GM12878 (cell line): ENCODE measurements at regions of chr1 and their contacts with region 1.

Region 1: GRCh38 chr1:76635784-76636183 is 231.5 kb upstream of the ST6GALNAC5 start:
- DNase-seq: no peak
- ATAC-seq: no peak
- H3K4me3 ChIP-seq: no peak overlapping the region
- H3K27ac ChIP-seq: no peak overlapping the region
- H3K4me1 ChIP-seq: no peaks in the 10 kb centered on the region
- H3K27me3 ChIP-seq: no peaks in the 10 kb centered on the region
- CTCF ChIP-seq: no peak
- EP300 ChIP-seq: no peak
- POLR2A ChIP-seq: no peak
- RAD21 ChIP-seq: no peak

Region 2: GRCh38 chr1:76366726-76367125 is 269.1 kb before region 1 on chr1:
- CTCF ChIA-PET with region 1: no interaction called
- POLR2A ChIA-PET with region 1: no interaction called
- RAD21 ChIA-PET with region 1: no interaction called
- SMC1A ChIA-PET with region 1: no interaction called
- in situ Hi-C with region 1: no loop called
- intact Hi-C with region 1: no loop called
- DNase-seq: no peak
- ATAC-seq: no peak
- H3K4me3 ChIP-seq: no peak overlapping the region
- H3K27ac ChIP-seq: no peak overlapping the region
- H3K4me1 ChIP-seq: no peaks in the 10 kb centered on the region
- H3K27me3 ChIP-seq: no peaks in the 10 kb centered on the region
- CTCF ChIP-seq: no peak
- EP300 ChIP-seq: no peak
- POLR2A ChIP-seq: no peak
- RAD21 ChIP-seq: no peak

Region 3: DNA sequence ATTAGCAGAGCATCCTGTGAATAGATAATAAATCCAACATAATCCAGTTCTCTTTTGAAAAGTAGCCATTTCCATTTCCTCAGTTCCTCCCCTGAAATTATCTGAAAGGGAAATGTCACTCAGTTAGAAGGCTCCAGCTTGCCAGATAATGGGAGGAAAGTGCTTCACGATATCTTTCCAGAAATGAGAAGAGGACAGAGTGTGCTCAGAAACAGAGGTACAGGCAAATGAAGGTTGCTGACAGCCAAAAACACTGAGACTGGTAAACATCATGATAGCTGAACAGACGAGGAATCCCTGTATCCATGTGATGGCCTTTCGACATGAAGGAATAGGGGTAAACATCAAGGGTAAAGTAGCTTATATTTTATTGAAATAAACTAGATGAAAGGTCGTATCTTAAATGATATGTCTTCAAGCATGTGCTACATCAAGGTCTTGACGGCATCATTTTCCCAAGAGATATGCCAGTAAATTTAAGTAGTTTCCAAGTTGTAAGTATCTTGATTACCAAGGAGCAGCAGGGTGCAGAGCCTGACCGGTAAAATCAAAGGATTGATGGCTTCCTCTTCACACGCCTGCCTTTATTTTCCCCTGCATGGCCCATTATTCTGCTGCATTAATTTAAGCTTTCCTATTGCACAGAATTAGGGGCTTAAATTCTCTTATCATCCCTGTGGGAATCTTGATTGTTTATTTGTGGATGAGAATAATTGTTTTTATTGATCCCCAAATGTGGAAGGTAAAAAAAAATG is 12.8 kb before region 1 on chr1:
- CTCF ChIA-PET with region 1: no interaction called
- POLR2A ChIA-PET with region 1: no interaction called
- RAD21 ChIA-PET with region 1: no interaction called
- SMC1A ChIA-PET with region 1: interaction called, 11 read pairs
- in situ Hi-C with region 1: no loop called
- intact Hi-C with region 1: no loop called
- DNase-seq: no peak
- ATAC-seq: no peak
- H3K4me3 ChIP-seq: no peak overlapping the region
- H3K27ac ChIP-seq: no peak overlapping the region
- H3K4me1 ChIP-seq: no peaks in the 10 kb centered on the region
- H3K27me3 ChIP-seq: no peaks in the 10 kb centered on the region
- CTCF ChIP-seq: no peak
- EP300 ChIP-seq: no peak
- POLR2A ChIP-seq: no peak
- RAD21 ChIP-seq: no peak

Region 4: DNA sequence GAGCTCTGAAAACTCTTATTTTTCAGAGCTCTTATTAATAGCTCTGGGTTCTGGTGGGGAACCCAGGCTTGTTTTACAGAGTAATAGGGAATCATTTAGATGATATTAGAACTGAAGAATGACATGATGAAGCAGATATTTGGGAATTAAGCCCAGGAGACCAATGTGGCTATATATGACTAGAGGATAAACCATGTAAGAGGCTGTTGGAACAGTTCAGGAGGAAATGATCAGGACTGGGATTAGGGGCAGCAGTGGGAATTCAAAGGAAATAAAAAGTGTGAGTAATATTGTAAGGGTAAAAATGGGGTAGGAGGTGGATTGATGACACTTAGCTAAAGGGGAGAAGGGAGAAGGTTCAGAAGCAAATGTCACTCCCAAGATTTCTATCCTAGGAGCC is 1468.5 kb after region 1 on chr1:
- CTCF ChIA-PET with region 1: no interaction called
- POLR2A ChIA-PET with region 1: no interaction called
- RAD21 ChIA-PET with region 1: no interaction called
- SMC1A ChIA-PET with region 1: no interaction called
- in situ Hi-C with region 1: no loop called
- intact Hi-C with region 1: no loop called
- DNase-seq: no peak
- ATAC-seq: no peak
- H3K4me3 ChIP-seq: no peak overlapping the region
- H3K27ac ChIP-seq: no peak overlapping the region
- H3K4me1 ChIP-seq: no peaks in the 10 kb centered on the region
- H3K27me3 ChIP-seq: no peaks in the 10 kb centered on the region
- CTCF ChIP-seq: no peak
- EP300 ChIP-seq: no peak
- POLR2A ChIP-seq: no peak
- RAD21 ChIP-seq: no peak